PC-3 (cell line): ENCODE measurements at regions of chr13 and their contacts with region 1.

Region 1: DNA sequence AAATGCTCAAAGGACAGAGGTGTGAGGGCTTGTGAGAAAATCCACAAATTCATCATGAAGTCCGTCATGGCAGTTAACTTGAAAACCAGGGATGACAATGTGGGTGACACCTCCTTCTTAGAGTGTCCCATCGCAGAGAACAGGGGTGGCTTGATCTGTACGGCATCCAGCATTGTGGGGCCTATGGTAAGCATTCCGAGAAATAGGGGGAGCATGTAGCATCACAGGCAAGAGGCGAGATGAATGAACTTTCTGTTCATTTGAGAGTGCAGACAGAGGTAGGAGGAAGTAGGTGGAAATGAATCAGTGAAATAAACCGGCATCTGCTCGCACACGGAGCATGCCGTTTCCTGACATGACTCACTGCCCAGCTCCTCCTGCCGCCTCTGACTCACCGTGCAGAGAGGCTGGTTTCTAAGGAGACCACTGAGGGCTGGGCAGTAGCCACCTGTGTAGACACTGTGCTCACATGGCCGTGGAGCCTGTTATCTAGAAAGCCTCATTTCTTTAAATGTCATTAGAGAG is 339.0 kb downstream of the RFC3 start:
- DNase-seq: peak; percentile 96
- ATAC-seq: peak; percentile 90
- H3K4me3 ChIP-seq: peak overlapping the region; percentile 51
- H3K27ac ChIP-seq: peak overlapping the region; percentile 99
- H3K4me1 ChIP-seq: peaks cover 54% of the 10 kb centered on the region
- H3K27me3 ChIP-seq: no peaks in the 10 kb centered on the region
- CTCF ChIP-seq: no peak

Region 2: GRCh38 chr13:34124666-34125305 is 32.1 kb before region 1 on chr13:
- CTCF ChIA-PET with region 1: no interaction called
- POLR2A ChIA-PET with region 1: no interaction called
- intact Hi-C with region 1: loop called (anchors 2 kb)
- DNase-seq: peak; percentile 87
- ATAC-seq: peak; percentile 84
- H3K4me3 ChIP-seq: no peak overlapping the region
- H3K27ac ChIP-seq: peak overlapping the region; percentile 85
- H3K4me1 ChIP-seq: peaks cover 45% of the 10 kb centered on the region
- H3K27me3 ChIP-seq: no peaks in the 10 kb centered on the region
- CTCF ChIP-seq: no peak

Region 3: DNA sequence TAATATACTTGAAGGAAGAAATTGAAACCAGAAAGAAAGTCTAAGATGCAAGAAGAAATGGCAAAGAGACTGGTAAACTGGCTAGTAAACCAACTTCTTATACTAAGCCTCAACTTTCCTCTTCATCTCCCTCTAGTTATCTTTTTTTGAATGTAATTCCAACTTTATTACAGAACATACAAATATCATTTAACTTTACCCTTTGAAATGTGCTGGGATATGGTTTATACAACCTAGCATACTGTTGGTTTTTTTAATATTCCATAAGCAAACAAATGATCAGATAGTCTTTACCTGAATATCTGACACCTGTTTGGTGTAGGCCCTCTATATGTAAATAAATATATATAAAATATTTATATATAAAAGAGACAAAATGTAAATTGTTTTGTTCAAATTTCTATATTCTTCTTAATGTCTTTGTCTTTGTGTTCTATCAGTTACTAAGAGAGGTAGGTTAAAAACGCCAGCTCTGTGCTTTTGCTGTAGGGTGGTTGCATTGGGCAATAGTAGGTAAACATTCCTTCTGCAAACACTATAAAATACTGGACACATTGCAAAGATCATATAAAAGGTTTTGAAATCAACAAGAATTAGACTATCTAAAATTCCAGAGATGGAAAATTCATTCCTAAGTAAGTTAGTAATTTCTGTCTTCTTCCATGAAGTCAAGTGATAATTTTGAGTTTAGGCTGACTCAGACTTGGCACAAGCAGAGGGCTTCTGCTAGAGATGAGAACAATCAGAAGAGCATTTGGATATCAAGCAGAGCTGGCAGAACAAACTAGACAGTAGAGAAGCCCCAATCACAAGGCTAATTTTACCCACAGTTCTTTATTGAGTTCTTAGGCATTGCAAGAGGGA is 44.4 kb after region 1 on chr13:
- CTCF ChIA-PET with region 1: no interaction called
- POLR2A ChIA-PET with region 1: no interaction called
- intact Hi-C with region 1: loop called (anchors 1 kb)
- DNase-seq: peak; percentile 83
- ATAC-seq: peak; percentile 91
- H3K4me3 ChIP-seq: no peak overlapping the region
- H3K27ac ChIP-seq: peak overlapping the region; percentile 88
- H3K4me1 ChIP-seq: peaks cover 35% of the 10 kb centered on the region
- H3K27me3 ChIP-seq: no peaks in the 10 kb centered on the region
- CTCF ChIP-seq: no peak

Region 4: DNA sequence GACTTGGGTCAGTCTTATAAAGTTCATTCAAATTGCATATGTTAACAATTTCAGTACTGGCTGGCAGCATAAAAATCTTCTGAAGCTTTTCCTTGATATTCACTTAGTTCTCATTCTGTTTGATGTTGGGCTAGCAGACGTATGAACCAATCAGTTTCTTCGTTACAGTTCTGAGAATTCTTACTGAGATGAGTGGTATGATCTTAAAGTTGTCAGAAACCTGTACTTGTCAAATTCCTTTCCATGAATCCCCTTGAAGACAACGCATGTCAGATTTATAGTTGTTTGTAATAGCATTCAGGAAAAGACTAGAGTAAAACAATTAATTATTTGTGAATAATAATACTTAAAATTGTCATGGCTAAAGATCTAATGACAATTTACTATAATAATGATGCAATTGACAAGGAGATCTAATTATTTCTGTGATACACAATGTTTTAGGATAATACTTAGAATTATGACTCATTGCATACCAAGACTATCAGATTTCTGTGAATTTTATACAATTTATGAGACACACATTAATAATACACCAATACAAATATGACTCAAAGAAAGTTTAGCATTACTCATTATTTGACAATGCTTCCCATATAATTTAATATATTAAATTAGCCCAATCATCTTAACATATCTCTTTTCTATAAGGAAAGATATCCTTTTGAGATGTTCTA is 108.3 kb after region 1 on chr13:
- CTCF ChIA-PET with region 1: no interaction called
- POLR2A ChIA-PET with region 1: no interaction called
- intact Hi-C with region 1: loop called (anchors 2 kb)
- DNase-seq: peak; percentile 78
- ATAC-seq: peak; percentile 87
- H3K4me3 ChIP-seq: no peak overlapping the region; the same call in 1 of the 2 replicates
- H3K27ac ChIP-seq: peak overlapping the region; percentile 93
- H3K4me1 ChIP-seq: peaks cover 19% of the 10 kb centered on the region
- H3K27me3 ChIP-seq: no peaks in the 10 kb centered on the region
- CTCF ChIP-seq: no peak